Activated CD8-positive, alpha-beta T cell treated with anti-CD3 and anti-CD28 coated beads for 36 hours (primary cell): ENCODE measurements at regions of chr10 and their contacts with region 1.

Region 1: DNA sequence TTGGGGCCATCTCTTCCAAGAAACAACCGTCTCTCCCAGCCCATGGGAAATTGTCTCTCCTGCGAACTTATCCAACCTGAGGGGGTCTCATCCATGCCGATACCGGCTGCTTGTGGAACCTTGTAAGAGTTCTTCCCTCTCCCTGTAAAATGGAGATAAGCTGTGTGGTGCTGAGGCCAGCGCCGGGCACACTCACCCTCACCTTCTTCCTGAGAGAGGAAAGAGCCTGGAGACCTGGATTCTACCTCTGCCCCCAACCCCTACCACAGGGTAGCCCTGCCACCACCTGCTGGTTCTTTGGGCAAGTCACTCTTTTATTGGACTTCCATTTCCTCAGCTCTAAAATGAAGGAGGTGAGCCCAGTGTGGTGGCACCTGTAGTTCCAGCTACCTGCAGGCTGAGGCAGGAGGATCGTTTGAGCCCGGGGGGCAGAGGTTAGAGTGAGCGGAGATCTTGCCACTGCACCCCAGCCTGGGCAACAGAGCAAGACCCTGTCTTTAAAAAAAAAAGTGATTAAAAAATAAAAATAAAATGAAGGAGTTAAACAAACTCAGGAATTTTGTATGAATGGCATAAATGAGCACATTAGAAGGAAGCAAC is 38.4 kb upstream of the PSAP start:
- DNase-seq: no peak
- ATAC-seq: no peak
- H3K4me3 Mint-ChIP-seq: peak overlapping the region; percentile 78
- H3K27ac Mint-ChIP-seq: peak overlapping the region; percentile 65
- H3K4me1 Mint-ChIP-seq: peaks cover 10% of the 10 kb centered on the region
- H3K27me3 Mint-ChIP-seq: peaks cover 5% of the 10 kb centered on the region
- CTCF ChIP-seq: no peak

Region 2: GRCh38 chr10:71740069-71740468 is 149.4 kb before region 1 on chr10:
- CTCF ChIA-PET with region 1: no interaction called
- POLR2A ChIA-PET with region 1: no interaction called
- intact Hi-C with region 1: no loop called
- DNase-seq: no peak
- ATAC-seq: no peak
- H3K4me3 Mint-ChIP-seq: no peak overlapping the region
- H3K27ac Mint-ChIP-seq: peak overlapping the region; percentile 97
- H3K4me1 Mint-ChIP-seq: peaks cover 100% of the 10 kb centered on the region
- H3K27me3 Mint-ChIP-seq: no peaks in the 10 kb centered on the region
- CTCF ChIP-seq: no peak

Region 3: GRCh38 chr10:71829171-71829570 is 60.3 kb before region 1 on chr10:
- CTCF ChIA-PET with region 1: interaction called, 17 read pairs
- POLR2A ChIA-PET with region 1: no interaction called
- intact Hi-C with region 1: loop called (anchors 10 kb)
- DNase-seq: peak; percentile 30
- ATAC-seq: no peak
- H3K4me3 Mint-ChIP-seq: no peak overlapping the region
- H3K27ac Mint-ChIP-seq: no peak overlapping the region
- H3K4me1 Mint-ChIP-seq: peaks cover 8% of the 10 kb centered on the region
- H3K27me3 Mint-ChIP-seq: no peaks in the 10 kb centered on the region
- CTCF ChIP-seq: no peak

Region 4: GRCh38 chr10:71835671-71836595 is 53.6 kb before region 1 on chr10:
- CTCF ChIA-PET with region 1: interaction called, 19 read pairs
- POLR2A ChIA-PET with region 1: no interaction called
- intact Hi-C with region 1: loop called (anchors 10 kb)
- DNase-seq: peak; percentile 39
- ATAC-seq: peak; percentile 70
- H3K4me3 Mint-ChIP-seq: no peak overlapping the region
- H3K27ac Mint-ChIP-seq: peak overlapping the region; percentile 23
- H3K4me1 Mint-ChIP-seq: peaks cover 55% of the 10 kb centered on the region
- H3K27me3 Mint-ChIP-seq: no peaks in the 10 kb centered on the region
- CTCF ChIP-seq: no peak

Region 5: DNA sequence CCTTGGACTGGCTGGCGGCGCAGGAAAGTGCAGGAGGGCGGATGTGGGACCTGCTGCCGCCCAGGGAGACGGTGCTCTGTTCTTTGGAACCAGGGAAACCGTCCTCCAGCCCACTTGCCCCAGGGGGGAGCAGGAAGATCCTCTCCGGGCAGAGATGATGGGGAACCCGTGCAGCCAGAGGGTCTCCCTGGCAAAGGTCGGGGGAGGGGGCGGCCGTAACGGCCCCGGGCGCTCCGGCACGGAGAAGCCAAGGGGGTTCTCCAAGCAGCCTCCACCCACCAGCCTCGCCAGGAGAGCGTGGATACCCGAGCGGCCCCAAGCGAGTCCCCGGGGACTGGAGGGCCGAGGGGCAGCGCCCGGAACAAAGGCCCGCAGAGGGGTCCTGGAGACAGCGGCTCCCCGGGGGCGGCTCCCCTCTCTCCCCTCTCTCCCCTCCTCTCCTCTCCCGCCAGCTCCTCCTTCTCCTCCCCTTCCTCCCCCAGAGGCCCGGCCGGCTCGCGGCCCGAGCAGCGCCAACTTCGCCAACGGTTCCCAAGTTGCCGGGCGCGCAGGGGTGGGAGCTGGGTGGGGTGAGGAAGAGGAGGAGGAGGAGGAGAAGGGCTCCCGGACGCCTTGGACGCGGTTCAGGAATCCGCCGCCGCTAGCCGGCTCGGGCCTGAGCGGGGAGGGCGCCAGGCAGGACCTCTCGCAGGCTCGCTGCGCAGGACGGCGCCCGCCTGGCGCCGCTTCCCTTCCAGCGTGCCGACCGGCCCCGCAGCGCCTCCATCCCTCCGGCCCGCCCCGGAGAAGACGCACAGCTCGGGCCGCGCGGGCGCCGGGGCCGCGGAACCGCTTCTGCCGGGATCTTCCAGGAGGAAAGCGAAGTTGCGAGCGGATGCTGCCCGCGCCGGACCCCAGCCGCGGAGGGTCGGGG is 74.5 kb after region 1 on chr10 and contains the start of gene CHST3:
- CTCF ChIA-PET with region 1: no interaction called
- POLR2A ChIA-PET with region 1: no interaction called
- intact Hi-C with region 1: no loop called
- DNase-seq: no peak
- ATAC-seq: peak; percentile 58
- H3K4me3 Mint-ChIP-seq: peak within 1 kb of the TSS; percentile 72
- H3K27ac Mint-ChIP-seq: peak within 1 kb of the TSS; percentile 53
- H3K4me1 Mint-ChIP-seq: peaks cover 19% of the 10 kb centered on the region
- H3K27me3 Mint-ChIP-seq: peaks cover 48% of the 10 kb centered on the region
- CTCF ChIP-seq: no peak
- total RNA-seq, gene CHST3: 0.20 to 0.36 TPM